A673 (cell line): ENCODE measurements at regions of chr3 and their contacts with region 1.

Region 1: DNA sequence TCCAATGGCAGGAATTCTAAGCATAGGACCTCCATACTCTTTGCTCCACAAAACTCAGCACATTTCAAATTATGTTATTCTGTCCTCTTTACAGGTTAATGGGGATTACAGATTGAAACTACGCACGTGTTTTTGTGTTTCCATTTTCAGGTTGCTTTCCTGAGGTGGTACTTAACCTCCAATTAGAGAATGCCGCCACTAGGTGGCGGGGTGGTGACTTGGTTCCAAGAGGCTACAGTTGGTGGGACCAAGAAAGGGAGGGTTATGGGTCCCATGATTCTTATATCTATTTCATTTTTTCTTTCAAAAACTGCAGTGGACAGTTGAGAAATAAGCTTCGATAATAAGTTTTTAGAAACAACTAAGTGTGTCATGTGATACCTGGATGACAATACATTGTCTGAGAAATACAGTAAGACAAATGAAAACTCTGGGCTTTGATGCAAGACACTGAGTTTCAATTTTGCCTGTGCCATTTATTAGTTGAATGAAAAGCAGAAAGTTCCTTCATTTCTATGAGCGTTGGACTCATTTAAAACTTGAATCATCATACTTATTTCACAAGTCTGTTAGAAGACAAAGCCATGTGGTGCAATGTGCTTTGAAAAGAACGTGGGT is 539.0 kb downstream of the FGF12 start:
- DNase-seq: peak; percentile 71
- H3K4me3 ChIP-seq: no peak overlapping the region
- H3K27ac ChIP-seq: no peak overlapping the region
- H3K4me1 ChIP-seq: peaks cover 16% of the 10 kb centered on the region
- H3K27me3 ChIP-seq: no peaks in the 10 kb centered on the region
- CTCF ChIP-seq: peak; percentile 83

Region 2: GRCh38 chr3:191792580-191792979 is 395.7 kb before region 1 on chr3:
- CTCF ChIA-PET with region 1: no interaction called
- POLR2A ChIA-PET with region 1: no interaction called
- intact Hi-C with region 1: loop called (anchors 2 kb)
- DNase-seq: no peak
- H3K4me3 ChIP-seq: no peak overlapping the region
- H3K27ac ChIP-seq: no peak overlapping the region
- H3K4me1 ChIP-seq: no peaks in the 10 kb centered on the region
- H3K27me3 ChIP-seq: no peaks in the 10 kb centered on the region
- CTCF ChIP-seq: no peak

Region 3: DNA sequence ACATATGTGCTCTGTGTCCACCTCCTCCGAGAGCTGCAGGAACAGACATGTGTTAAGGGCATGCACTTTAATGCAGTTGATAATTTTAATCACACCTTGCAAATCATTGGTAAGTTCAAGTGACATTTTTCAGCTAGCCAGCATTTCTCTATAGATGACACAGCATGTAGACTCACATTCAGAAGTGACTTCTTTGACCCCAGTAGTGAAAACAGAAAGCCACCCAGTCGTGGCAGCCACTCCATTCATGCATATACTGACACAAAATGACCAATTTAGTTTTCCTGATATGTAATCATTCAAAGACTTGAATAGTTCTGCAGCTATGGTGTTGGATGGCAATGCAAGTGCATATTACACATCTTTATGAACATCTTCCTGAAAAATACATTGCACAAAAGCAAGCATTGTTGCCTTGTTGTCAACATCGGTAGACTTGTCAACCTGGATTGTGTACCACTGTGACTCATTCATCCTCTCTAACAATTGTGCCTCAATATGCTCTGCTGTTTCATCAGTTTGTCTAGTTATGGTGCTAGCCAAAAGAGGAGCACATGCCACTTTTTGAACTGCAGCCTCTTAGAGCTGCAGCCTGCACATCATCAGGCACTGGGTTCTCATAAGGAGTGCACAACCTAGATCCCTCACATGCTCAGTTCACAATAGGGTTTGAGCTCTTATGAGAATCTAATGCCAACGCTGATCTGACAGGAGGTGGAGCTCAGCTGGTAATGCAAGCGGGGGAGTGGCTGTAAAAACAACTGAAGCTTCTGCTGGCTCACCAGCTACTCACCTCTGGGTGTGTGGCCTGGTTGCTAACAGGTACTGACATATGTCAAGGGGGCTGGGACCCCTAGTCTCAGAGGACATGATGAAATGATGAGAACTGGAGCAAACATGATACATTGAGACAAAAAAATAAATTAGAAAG is 105.3 kb before region 1 on chr3:
- CTCF ChIA-PET with region 1: no interaction called
- POLR2A ChIA-PET with region 1: no interaction called
- intact Hi-C with region 1: no loop called
- DNase-seq: no peak
- H3K4me3 ChIP-seq: no peak overlapping the region
- H3K27ac ChIP-seq: no peak overlapping the region
- H3K4me1 ChIP-seq: no peaks in the 10 kb centered on the region
- H3K27me3 ChIP-seq: no peaks in the 10 kb centered on the region
- CTCF ChIP-seq: no peak

Region 4: DNA sequence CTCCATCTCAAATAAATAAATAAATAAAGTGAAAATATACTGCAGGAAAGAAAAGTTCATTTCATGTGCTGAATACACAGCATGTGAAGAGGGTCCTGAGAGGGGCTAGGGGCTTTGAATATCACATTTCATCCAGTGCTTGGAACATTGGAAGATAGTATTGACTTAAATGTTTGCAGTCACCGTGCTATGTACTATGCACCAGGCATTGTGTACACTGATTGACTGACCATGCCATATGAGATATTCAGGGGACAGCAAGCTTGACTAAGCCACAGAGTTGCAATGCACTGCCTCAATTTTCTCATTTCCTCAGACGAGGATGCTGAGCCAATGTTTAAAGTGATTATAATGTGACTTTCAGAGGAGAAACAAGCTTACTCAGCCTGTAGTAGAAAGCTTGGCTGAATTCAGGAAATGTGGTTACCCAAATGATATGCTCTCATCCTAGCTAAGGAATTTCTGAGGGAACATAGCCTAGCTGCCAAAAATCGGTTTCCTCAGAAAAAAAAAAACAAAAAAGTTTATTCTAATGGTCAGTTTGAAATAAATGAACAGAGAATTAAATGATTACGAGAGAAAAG is 18.9 kb before region 1 on chr3:
- CTCF ChIA-PET with region 1: no interaction called
- POLR2A ChIA-PET with region 1: no interaction called
- intact Hi-C with region 1: no loop called
- DNase-seq: no peak
- H3K4me3 ChIP-seq: no peak overlapping the region
- H3K27ac ChIP-seq: no peak overlapping the region
- H3K4me1 ChIP-seq: no peaks in the 10 kb centered on the region
- H3K27me3 ChIP-seq: no peaks in the 10 kb centered on the region
- CTCF ChIP-seq: no peak

Region 5: DNA sequence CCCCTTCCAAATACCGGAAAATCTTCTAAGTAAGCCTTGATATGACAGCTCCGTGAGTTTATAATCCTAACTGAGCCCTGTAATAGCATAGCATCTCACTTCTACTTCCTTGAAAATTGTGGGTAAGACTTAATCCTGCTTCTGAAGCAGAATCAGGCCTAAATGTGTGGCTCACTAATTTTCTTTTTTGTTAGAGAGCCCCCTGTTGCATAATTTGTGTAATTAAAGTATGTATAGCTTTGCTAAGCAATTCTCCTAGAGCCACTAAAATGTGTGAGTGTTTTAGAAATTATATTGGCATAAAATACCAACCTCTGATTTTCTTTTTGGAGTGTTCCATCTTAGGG is 234.6 kb after region 1 on chr3:
- CTCF ChIA-PET with region 1: interaction called, 6 read pairs
- POLR2A ChIA-PET with region 1: no interaction called
- intact Hi-C with region 1: loop called (anchors 5 kb)
- DNase-seq: peak; percentile 61
- H3K4me3 ChIP-seq: no peak overlapping the region
- H3K27ac ChIP-seq: no peak overlapping the region
- H3K4me1 ChIP-seq: no peaks in the 10 kb centered on the region
- H3K27me3 ChIP-seq: no peaks in the 10 kb centered on the region
- CTCF ChIP-seq: peak; percentile 55

Region 6: DNA sequence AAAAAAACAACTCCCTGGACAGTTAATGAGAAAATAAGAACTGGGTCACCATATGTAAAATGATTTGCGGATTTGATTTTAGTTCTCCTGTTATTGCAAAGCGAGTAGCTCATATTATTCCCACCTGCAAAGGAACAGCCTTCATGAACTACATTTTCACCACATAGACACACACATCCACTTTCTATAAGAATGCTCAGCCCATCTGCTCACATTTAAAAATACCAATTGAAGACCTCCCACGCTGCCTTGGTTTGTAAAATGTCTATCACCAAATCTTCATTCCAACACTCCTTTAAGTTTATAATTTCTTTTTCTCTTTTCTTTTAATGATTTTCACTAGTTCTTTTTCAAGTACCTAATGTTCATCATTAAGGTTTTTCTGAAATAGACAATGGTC is 390.4 kb after region 1 on chr3:
- CTCF ChIA-PET with region 1: no interaction called
- POLR2A ChIA-PET with region 1: no interaction called
- intact Hi-C with region 1: no loop called
- DNase-seq: no peak
- H3K4me3 ChIP-seq: no peak overlapping the region
- H3K27ac ChIP-seq: no peak overlapping the region
- H3K4me1 ChIP-seq: no peaks in the 10 kb centered on the region
- H3K27me3 ChIP-seq: no peaks in the 10 kb centered on the region
- CTCF ChIP-seq: no peak